ENCODE measurements at regions of chr5 and their contacts with region 1.

Region 1: GRCh38 chr5:138542956-138543729 is at the start of gene ETF1:
- DNase-seq: peak; percentile 100
- H3K4me3 ChIP-seq: peak within 1 kb of the TSS; percentile 93 to 95
- H3K27ac ChIP-seq: peak within 1 kb of the TSS; percentile 96 to 97
- H3K4me1 ChIP-seq: peaks cover 9% of the 10 kb centered on the region
- H3K27me3 ChIP-seq: no peaks in the 10 kb centered on the region
- CTCF ChIP-seq: peak in 2 of 4 experiments; percentile 32 to 64
- POLR2A ChIP-seq: peak; percentile 99
- total RNA-seq, gene ETF1: 58.0 to 64.1 TPM

Region 2: GRCh38 chr5:137010226-137010625 is 1532.9 kb before region 1 on chr5:
- intact Hi-C with region 1: no loop called
- DNase-seq: no peak
- H3K4me3 ChIP-seq: no peak overlapping the region
- H3K27ac ChIP-seq: no peak overlapping the region
- H3K4me1 ChIP-seq: no peaks in the 10 kb centered on the region
- H3K27me3 ChIP-seq: no peaks in the 10 kb centered on the region
- CTCF ChIP-seq: no peak
- POLR2A ChIP-seq: no peak

Region 3: DNA sequence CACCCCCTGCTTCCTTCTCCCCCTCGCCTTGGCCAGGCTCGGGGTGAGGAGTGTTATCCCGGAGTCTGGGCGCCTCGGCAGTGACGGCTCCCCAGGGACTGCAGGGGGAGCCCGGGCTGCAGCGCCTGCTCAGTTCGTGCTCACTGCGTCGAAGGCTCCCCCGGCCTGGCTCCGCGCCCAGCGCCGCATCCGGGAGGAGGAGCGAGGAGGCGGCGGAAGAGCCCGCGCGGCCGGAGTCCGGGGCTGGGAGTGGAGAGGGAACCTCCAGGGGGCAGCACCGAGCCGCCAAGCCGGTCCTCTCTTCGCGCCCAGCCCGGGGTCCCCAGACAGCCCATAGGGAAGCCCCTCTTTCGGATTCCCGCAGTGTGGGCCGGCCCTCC is 79.1 kb before region 1 on chr5:
- intact Hi-C with region 1: loop called (anchors 1 kb)
- DNase-seq: peak; percentile 94
- H3K4me3 ChIP-seq: peak overlapping the region; percentile 69 to 97
- H3K27ac ChIP-seq: peak overlapping the region; percentile 99
- H3K4me1 ChIP-seq: peaks cover 3% of the 10 kb centered on the region
- H3K27me3 ChIP-seq: no peaks in the 10 kb centered on the region
- CTCF ChIP-seq: peak; percentile 76 to 98 (median 98)
- POLR2A ChIP-seq: peak; percentile 72